ENCODE measurements at regions of chr2 and their contacts with region 1.

Region 1: DNA sequence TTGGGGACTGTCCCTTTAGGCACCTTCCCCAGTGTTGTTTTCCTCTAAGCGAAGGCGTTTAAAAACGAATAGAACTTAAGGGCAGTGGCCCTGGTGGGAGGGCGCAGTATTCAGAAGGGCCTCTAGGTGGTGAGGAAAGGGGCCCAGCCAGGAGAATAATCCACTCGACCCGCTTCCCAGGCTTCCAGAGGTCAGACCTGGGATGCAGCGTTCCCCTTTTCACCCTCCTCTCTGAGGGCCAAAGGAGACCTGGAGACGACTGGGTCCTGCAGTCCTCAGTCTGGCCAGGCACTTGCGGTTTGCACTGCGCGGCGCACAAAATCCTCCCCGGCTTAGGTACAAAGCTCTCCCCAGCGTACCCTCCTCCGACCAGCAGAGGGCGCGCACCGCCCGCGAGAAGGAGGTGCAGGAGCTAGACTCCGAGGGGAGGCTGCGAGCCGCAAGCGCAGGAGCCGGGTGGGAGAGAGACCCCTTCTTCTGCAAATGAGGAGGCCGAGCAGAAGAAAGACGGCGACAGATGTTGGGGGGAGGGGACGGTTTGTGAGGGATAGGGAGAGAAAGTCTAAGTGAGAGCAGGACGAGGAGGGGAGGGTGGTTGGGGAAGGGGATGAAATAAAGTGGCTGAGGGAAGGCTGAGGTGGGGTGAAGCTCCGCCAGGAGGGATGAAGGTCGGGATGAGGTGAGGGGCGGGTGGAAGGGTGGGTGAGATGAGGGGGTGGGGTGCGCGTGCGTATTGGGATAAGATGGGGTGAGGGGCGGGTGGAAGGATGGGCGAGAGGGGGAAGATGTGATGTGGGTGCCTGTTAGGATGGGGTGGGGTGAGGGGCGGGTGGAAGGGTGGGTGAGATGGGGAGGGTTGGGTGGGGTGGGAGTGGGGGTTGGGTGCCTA is 4.9 kb downstream of the FEV start:
- DNase-seq: peak; percentile 87
- H3K4me3 Mint-ChIP-seq: peak overlapping the region; percentile 50
- H3K27ac Mint-ChIP-seq: no peak overlapping the region
- H3K4me1 Mint-ChIP-seq: peaks cover 26% of the 10 kb centered on the region
- H3K27me3 Mint-ChIP-seq: peaks cover 92% of the 10 kb centered on the region

Region 2: GRCh38 chr2:218959141-218959731 is 20.9 kb before region 1 on chr2 and contains the start of gene CDK5R2:
- CTCF ChIA-PET with region 1: interaction called, 10 read pairs
- DNase-seq: peak; percentile 59
- H3K4me3 Mint-ChIP-seq: peak within 1 kb of the TSS; percentile 19
- H3K27ac Mint-ChIP-seq: peak within 1 kb of the TSS; percentile 65
- H3K4me1 Mint-ChIP-seq: peaks cover 7% of the 10 kb centered on the region
- H3K27me3 Mint-ChIP-seq: peaks cover 100% of the 10 kb centered on the region

Region 3: GRCh38 chr2:218995972-218996711 is 16.1 kb after region 1 on chr2:
- CTCF ChIA-PET with region 1: interaction called, 13 read pairs
- DNase-seq: peak; percentile 83
- H3K4me3 Mint-ChIP-seq: no peak overlapping the region
- H3K27ac Mint-ChIP-seq: no peak overlapping the region
- H3K4me1 Mint-ChIP-seq: peaks cover 10% of the 10 kb centered on the region
- H3K27me3 Mint-ChIP-seq: peaks cover 100% of the 10 kb centered on the region

Region 4: GRCh38 chr2:219073413-219074129 is 93.5 kb after region 1 on chr2:
- CTCF ChIA-PET with region 1: no interaction called
- DNase-seq: no peak
- H3K4me3 Mint-ChIP-seq: no peak overlapping the region
- H3K27ac Mint-ChIP-seq: no peak overlapping the region
- H3K4me1 Mint-ChIP-seq: no peaks in the 10 kb centered on the region
- H3K27me3 Mint-ChIP-seq: no peaks in the 10 kb centered on the region